WTC11 (cell line): ENCODE measurements at regions of chr19 and their contacts with region 1.

Region 1: GRCh38 chr19:11673608-11674041 is 65.1 kb downstream of the ZNF823 start:
- DNase-seq: peak; percentile 84
- ATAC-seq: peak; percentile 97
- H3K4me3 Mint-ChIP-seq: peak overlapping the region; percentile 88
- H3K27ac Mint-ChIP-seq: peak overlapping the region; percentile 71; the same call in 1 of the 2 replicates
- H3K4me1 Mint-ChIP-seq: peaks cover 4% of the 10 kb centered on the region; the same call in 1 of the 2 replicates
- H3K27me3 Mint-ChIP-seq: peaks cover 19% of the 10 kb centered on the region
- CTCF ChIP-seq: peak; percentile 46; the same call in 1 of the 2 replicates

Region 2: GRCh38 chr19:11624069-11624463 is 49.6 kb before region 1 on chr19:
- CTCF ChIA-PET with region 1: no interaction called
- POLR2A ChIA-PET with region 1: no interaction called
- DNase-seq: no peak
- ATAC-seq: no peak
- H3K4me3 Mint-ChIP-seq: peak overlapping the region; percentile 74
- H3K27ac Mint-ChIP-seq: no peak overlapping the region
- H3K4me1 Mint-ChIP-seq: peaks cover 21% of the 10 kb centered on the region
- H3K27me3 Mint-ChIP-seq: peaks cover 34% of the 10 kb centered on the region
- CTCF ChIP-seq: no peak

Region 3: DNA sequence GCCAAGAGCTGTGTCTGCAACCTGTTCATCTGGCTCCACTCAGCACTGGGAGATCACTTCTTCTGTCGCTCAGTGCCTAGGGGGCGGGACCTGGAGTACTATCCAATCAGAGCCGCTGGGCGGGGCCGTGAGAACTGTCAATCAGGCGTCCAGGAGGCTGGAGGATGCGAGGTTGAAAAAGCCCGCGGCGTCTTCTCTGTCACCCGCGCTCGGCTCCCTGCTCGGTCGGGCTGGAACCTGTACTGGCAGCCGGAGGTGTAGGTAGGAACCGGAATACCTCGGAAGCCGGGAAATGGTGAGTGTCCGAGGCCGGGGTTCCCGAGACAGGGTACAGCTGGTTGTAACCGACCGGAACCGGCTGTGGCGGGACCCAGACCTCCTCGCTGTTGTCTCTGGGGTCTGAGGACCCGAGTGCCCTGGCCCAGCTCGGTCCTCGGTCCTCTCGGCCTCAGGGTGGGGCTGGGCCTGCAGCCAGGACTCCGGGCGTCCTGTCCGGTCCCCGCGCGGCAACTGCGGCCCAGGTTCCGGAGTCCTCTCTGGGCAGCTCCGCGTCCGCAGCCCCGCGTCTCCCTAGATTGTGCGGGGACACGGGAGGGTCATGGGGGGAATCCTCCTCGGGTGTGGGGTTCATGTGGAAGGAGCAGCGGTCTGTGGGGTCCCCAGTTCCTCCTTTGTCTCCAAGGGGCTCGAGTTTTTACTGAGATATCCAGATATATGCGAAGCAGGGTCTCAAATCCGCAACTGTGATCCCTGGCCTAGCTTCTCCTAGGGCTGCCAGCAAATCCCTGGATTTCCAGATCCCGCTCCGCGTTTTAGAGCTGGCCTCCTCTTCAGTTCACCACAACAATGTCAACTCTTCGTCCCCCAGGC is 33.8 kb before region 1 on chr19:
- CTCF ChIA-PET with region 1: interaction called, 10 read pairs
- POLR2A ChIA-PET with region 1: no interaction called
- DNase-seq: peak; percentile 100
- ATAC-seq: peak; percentile 98
- H3K4me3 Mint-ChIP-seq: peak overlapping the region; percentile 87
- H3K27ac Mint-ChIP-seq: peak overlapping the region; percentile 84
- H3K4me1 Mint-ChIP-seq: peaks cover 4% of the 10 kb centered on the region
- H3K27me3 Mint-ChIP-seq: no peaks in the 10 kb centered on the region
- CTCF ChIP-seq: no peak

Region 4: DNA sequence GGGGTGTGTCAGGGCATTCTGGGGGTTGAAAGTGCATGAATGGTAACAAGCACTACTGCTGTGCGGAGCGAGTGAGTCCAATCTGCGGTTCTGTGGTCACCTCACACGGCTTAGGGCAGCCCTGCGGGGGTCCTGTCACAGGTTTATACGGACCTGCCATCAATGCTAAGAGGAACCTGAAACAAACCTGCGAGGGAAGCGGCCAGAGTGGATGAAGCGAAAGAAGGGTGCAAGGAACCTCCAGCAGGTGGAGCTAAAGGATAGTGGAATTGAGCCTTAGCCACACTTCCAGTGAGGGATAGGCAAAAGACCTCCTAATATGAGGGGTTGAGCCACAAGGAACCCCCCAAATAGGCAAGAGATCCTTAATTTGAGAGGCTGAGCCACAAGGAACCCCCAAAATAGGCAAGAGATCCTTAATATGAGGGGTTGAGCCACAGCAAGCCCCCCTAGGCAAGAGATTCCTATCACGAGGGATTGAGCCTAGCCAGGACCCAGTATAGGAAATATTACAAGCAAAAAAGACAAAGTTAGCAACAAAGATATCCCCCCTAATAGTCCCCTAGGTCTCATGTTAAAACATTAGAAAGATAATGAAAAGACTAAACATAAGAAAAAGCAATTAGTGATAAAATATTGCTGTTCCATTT is 207.7 kb after region 1 on chr19:
- CTCF ChIA-PET with region 1: no interaction called
- POLR2A ChIA-PET with region 1: no interaction called
- DNase-seq: peak; percentile 76
- ATAC-seq: peak; percentile 74
- H3K4me3 Mint-ChIP-seq: peak overlapping the region; percentile 13
- H3K27ac Mint-ChIP-seq: no peak overlapping the region
- H3K4me1 Mint-ChIP-seq: peaks cover 1% of the 10 kb centered on the region; the same call in 1 of the 2 replicates
- H3K27me3 Mint-ChIP-seq: peaks cover 8% of the 10 kb centered on the region
- CTCF ChIP-seq: peak; percentile 51